Endothelial cell of umbilical vein (primary cell): ENCODE measurements at regions of chr19 and their contacts with region 1.

Region 1: DNA sequence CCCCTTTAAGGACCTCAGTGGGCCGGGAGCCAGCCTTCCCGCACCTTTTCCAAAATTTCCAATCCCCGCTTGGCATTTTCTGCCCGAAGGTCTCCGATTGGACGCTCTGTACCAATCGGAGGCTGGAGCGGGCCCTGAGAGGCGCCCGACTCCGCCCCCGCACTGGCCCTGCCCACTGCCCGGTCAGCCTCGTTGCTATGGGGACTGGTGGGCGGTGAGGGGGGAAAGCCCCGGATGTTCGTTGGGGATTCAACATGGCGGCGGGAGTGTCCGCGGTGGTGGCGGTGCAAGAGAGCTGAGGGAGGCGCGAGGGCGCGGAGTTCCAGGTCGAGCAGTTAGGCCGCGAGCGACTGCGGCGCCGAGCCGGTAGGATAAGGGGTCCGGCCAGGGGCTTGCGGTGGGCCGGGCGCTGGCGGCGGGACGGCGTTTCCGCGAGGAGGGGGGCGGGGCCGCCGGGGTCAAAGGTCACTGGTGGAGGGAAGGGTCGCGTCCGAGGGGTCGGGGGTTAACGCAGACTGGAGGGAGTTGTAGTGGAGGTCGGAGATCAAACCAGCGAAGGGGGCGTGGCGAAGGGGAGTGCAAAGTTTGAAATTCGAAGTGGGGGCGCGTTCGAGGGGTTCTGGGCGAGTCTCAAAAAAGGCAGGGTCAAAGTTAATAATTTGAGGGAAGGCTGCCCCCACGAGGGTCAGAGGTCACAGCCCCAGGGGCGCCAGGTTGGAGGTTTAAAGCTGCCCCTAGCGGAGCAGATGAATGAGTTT is at the start of gene PAK4:
- DNase-seq: peak; percentile 97
- H3K4me3 ChIP-seq: peak within 1 kb of the TSS; percentile 71 to 97 (median 85)
- H3K27ac ChIP-seq: peak within 1 kb of the TSS; percentile 39
- H3K4me1 ChIP-seq: peaks cover 18% of the 10 kb centered on the region
- H3K27me3 ChIP-seq: no peaks in the 10 kb centered on the region
- CTCF ChIP-seq: no peak
- POLR2A ChIP-seq: peak; percentile 71
- total RNA-seq, gene PAK4: 49.6 and 55.4 TPM in 2 replicates

Region 2: GRCh38 chr19:39144245-39145071 is 18.7 kb after region 1 on chr19:
- CTCF ChIA-PET with region 1: interaction called, 16 read pairs
- POLR2A ChIA-PET with region 1: no interaction called
- dilution Hi-C with region 1: no loop called
- intact Hi-C with region 1: loop called (anchors 1 kb)
- DNase-seq: peak; percentile 90
- H3K4me3 ChIP-seq: no peak overlapping the region
- H3K27ac ChIP-seq: peak overlapping the region; percentile 21
- H3K4me1 ChIP-seq: peaks cover 19% of the 10 kb centered on the region
- H3K27me3 ChIP-seq: no peaks in the 10 kb centered on the region
- CTCF ChIP-seq: no peak
- POLR2A ChIP-seq: no peak

Region 3: DNA sequence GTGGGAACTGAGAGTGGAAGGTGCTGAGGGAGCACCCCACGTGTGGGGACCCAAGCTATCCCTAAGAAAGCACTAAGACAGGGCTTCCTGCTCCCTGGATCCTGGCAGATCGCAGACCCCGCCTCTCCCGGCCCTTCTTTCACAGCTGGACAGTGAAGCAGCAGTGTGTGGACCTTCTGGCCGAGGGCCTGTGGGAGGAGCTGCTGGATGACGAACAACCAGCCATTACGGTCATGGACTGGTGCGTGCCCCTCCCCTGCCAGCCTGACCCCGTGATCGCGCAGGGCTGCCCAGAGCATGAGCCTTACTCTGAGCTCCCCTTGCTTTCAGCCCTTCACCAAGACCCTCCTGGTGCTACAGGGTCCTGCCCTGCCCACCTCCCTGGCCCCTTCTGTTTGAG is 73.3 kb after region 1 on chr19:
- CTCF ChIA-PET with region 1: interaction called, 10 read pairs
- POLR2A ChIA-PET with region 1: no interaction called
- dilution Hi-C with region 1: no loop called
- intact Hi-C with region 1: no loop called
- DNase-seq: peak; percentile 18
- H3K4me3 ChIP-seq: no peak overlapping the region
- H3K27ac ChIP-seq: no peak overlapping the region
- H3K4me1 ChIP-seq: no peaks in the 10 kb centered on the region
- H3K27me3 ChIP-seq: peaks cover 33 to 38% of the 10 kb centered on the region in 2 experiments
- CTCF ChIP-seq: no peak
- POLR2A ChIP-seq: no peak

Region 4: GRCh38 chr19:39390755-39391592 is 265.2 kb after region 1 on chr19 and contains the starts of genes MED29 and PAF1:
- CTCF ChIA-PET with region 1: interaction called, 7 read pairs
- POLR2A ChIA-PET with region 1: no interaction called
- dilution Hi-C with region 1: no loop called
- intact Hi-C with region 1: loop called (anchors 5 kb)
- DNase-seq: peak; percentile 100
- H3K4me3 ChIP-seq: peak within 1 kb of the TSS; percentile 60 to 84 (median 83)
- H3K27ac ChIP-seq: peak within 1 kb of the TSS; percentile 83
- H3K4me1 ChIP-seq: peaks cover 9% of the 10 kb centered on the region
- H3K27me3 ChIP-seq: no peaks in the 10 kb centered on the region
- CTCF ChIP-seq: peak in 1 of 2 donors; percentile 7
- POLR2A ChIP-seq: peak; percentile 98
- total RNA-seq, gene MED29: 24.7 and 25.5 TPM in 2 replicates
- total RNA-seq, gene PAF1: 53.6 and 55.1 TPM in 2 replicates